ENCODE measurements at regions of chr17 and their contacts with region 1.

Region 1: DNA sequence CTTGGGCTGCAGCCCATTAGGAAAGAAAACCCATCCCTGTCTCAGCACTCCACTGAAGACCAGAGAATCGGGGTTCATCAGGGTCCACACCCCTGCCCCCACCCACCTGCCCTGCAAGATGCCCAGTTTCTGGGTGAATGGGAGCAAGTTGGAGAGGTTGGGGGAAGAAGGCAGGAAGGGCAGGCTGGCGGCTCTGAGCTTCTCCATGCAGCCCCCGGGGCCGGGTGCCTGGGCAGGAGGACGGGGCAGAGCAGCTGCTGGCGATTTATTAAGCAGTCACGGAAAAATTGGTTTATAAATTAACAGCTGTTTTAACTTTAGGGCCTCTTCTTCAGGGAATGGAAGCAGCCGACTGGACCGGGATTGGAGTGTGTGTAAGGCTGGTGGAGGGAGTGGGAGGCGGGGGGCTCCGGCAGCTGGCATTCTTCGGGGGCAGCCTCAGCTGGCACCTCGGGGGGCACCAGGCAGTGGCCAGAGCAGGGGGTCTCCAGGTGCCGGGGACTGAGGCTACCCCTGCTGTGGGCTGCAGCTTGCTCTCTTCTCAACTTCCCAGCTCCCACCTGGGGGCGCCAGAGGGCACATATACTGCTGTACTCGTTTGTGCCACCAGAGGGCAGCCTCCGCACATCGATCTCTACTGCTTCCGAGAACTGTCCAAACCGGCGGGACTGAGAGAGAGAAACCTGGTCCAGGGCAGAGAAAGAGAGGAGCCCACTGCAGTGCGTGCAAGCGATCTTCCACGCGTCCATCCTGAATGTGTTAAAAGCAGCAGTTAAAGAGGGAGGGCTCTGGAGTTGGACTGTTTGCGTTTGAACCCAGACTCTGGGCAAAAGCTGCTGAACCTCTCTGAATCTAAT is 5.0 kb upstream of the PPP1R1B start:
- DNase-seq: no peak
- H3K4me3 ChIP-seq: peak overlapping the region; percentile 8; the same call in 1 of the 2 replicates
- CTCF ChIP-seq: peak; percentile 100

Region 2: GRCh38 chr17:39164675-39165143 is 457.0 kb before region 1 on chr17:
- CTCF ChIA-PET with region 1: no interaction called
- POLR2A ChIA-PET with region 1: no interaction called
- DNase-seq: no peak
- H3K4me3 ChIP-seq: peak overlapping the region; percentile 55
- CTCF ChIP-seq: peak; percentile 93

Region 3: GRCh38 chr17:39270923-39271322 is 350.8 kb before region 1 on chr17:
- CTCF ChIA-PET with region 1: interaction called, 10 read pairs
- POLR2A ChIA-PET with region 1: no interaction called
- DNase-seq: peak; percentile 69
- H3K4me3 ChIP-seq: no peak overlapping the region
- CTCF ChIP-seq: peak; percentile 56

Region 4: DNA sequence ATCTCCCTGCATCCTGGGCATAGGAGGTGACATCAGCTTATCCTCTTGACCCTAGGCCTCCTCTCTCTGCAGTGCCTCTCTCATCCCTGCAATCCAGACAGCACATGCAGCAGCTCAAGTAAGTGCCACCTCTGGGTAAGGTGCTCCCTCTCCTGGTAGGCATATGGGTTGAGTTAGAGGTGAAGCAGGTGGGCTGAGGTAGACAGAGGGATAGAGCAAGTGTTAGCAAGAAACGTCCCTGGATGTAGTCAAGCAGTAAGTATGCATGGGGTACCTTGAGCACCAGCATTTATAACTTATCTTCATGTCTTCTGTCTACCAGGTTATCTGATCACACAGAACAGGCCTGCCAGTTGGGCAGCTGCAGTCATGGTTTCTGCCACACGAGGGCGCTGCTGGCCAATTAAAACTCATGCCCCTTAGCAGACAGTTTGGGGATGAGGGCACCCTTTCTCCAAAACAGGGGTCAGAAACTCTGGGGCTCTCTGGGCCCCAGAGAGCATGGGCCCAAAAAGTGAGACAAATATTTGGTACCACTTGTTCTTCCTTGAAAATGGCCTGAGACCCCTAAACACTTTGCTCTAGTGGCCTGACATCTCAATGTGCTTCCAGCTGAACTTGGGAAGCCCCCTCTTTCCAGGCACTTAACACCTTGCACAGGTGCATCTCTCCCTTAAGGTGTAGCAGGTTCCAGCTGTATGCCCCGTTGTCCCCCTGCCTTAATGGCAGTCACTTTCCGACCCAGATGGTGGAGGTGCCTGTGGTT is 73.9 kb before region 1 on chr17:
- CTCF ChIA-PET with region 1: interaction called, 781 read pairs
- POLR2A ChIA-PET with region 1: interaction called, 3 read pairs
- DNase-seq: no peak
- H3K4me3 ChIP-seq: no peak overlapping the region
- CTCF ChIP-seq: peak; percentile 82

Region 5: GRCh38 chr17:39598047-39598481 is 23.7 kb before region 1 on chr17:
- CTCF ChIA-PET with region 1: interaction called, 71 read pairs
- POLR2A ChIA-PET with region 1: no interaction called
- DNase-seq: no peak
- H3K4me3 ChIP-seq: no peak overlapping the region
- CTCF ChIP-seq: no peak

Region 6: DNA sequence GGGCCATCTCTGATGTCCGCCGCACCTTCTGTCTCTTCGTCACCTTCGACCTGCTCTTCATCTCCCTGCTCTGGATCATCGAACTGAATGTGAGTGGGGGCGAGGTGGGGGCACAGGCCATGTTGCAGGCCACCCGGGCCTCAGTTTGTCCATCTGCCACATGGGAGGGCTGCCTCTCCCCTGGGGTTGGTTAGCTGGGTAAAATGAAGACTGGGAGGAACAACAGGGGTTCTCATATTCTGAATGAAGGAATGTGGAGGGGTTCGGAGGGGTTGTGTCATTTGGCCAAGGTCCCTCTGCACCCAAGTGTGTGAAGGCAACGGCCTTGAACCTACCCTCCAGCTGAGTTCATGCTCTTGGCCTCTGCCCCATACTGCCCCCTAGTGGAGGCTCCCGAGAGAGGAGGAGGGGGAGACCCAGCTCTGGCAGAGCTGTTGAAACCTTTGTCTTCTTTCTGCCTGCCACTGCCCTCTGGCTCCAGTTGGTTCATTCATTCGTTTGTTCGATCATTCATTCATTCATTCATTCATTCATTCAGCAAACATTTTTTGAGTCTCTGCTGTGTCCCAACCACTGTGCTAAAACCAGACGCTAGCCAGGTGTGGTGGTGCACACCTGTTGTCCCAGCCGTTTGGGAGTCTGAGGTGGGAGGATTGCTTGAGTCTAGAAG is 32.0 kb after region 1 on chr17:
- CTCF ChIA-PET with region 1: interaction called, 822 read pairs
- POLR2A ChIA-PET with region 1: no interaction called
- DNase-seq: no peak
- H3K4me3 ChIP-seq: no peak overlapping the region
- CTCF ChIP-seq: peak; percentile 82

Region 7: GRCh38 chr17:39687811-39688518 is 66.2 kb after region 1 on chr17 and contains the start of gene PGAP3:
- CTCF ChIA-PET with region 1: interaction called, 18 read pairs
- POLR2A ChIA-PET with region 1: no interaction called
- DNase-seq: peak; percentile 44
- H3K4me3 ChIP-seq: peak within 1 kb of the TSS; percentile 76
- CTCF ChIP-seq: no peak

Region 8: GRCh38 chr17:39754161-39754951 is 132.6 kb after region 1 on chr17:
- CTCF ChIA-PET with region 1: interaction called, 69 read pairs
- POLR2A ChIA-PET with region 1: no interaction called
- DNase-seq: no peak
- H3K4me3 ChIP-seq: peak overlapping the region; percentile 69
- CTCF ChIP-seq: peak; percentile 92

Region 9: GRCh38 chr17:39861235-39861634 is 239.5 kb after region 1 on chr17:
- CTCF ChIA-PET with region 1: no interaction called
- POLR2A ChIA-PET with region 1: no interaction called
- DNase-seq: no peak
- H3K4me3 ChIP-seq: no peak overlapping the region
- CTCF ChIP-seq: no peak